Heart left ventricle (tissue), 16 donors: ENCODE measurements at regions of chr6 and their contacts with region 1.

Region 1: DNA sequence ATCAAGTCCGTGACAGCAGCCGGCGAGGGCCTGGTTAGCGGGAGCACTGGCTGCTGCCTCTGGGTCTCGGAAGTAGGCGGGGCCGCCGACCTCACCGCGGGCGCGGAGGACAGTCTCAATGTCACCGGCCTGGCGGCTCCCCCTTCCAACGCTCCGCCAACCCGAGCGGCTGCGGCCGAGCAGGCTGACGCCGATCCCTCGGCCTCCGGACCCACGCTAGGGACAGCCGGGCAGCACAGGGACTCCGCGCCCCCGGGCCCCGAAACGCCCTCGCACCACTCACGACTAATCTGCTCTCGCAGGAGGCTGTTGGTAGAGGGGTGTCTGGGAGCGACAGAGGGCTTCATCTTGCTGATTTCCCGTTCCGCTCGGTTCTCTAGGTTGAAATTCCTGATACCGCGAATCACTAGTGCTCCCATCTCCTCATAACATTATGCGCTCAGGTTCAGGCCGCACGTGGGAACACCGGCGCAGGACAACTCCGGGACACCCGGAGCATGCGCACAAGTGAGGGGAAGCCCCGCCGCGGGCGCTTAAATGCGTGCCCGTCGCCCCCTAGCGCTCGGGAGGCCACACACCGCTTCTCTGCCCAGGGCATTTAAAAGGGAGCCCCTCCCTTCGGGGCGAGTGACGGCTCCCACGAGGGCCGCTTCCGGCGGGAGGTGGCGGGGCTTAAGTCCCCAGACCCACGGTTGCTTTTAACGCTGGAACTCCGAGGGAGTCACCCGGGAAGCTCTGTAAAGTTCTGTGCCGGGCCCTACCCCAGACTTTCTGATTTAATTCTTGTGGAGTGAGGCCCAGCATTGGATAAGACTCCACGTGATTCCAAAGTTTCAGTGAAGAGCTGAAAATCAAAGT is at the start of gene NDUFAF4:
- DNase-seq: peak; percentile 96 to 98 (median 97)
- ATAC-seq: peak; percentile 98 to 99 (median 98)
- H3K4me3 ChIP-seq: peak within 1 kb of the TSS; percentile 72 to 97 (median 92)
- H3K27ac ChIP-seq: peak within 1 kb of the TSS; percentile 91 to 99 (median 96)
- H3K4me1 ChIP-seq: peaks cover 3 to 50% (median 32%) of the 10 kb centered on the region in 12 donors
- H3K27me3 ChIP-seq: no peaks in the 10 kb centered on the region
- CTCF ChIP-seq: peak; percentile 89 to 99 (median 94)
- POLR2A ChIP-seq: peak in 1 of 2 donors; percentile 52
- total RNA-seq, gene NDUFAF4: 59.6 to 107 (median 89.7) TPM

Region 2: GRCh38 chr6:96521644-96522464 is 375.8 kb before region 1 on chr6 and contains the start of gene UFL1:
- intact Hi-C with region 1: loop called in 2 of 10 experiments (anchors 10 kb)
- DNase-seq: peak; percentile 95 to 97 (median 96)
- ATAC-seq: peak; percentile 100
- H3K4me3 ChIP-seq: peak within 1 kb of the TSS; percentile 70 to 93 (median 84)
- H3K27ac ChIP-seq: peak within 1 kb of the TSS; percentile 83 to 98 (median 96)
- H3K4me1 ChIP-seq: peaks cover 0 to 31% (median 24%) of the 10 kb centered on the region in 12 donors
- H3K27me3 ChIP-seq: no peaks in the 10 kb centered on the region
- CTCF ChIP-seq: peak in 1 of 12 donors; percentile 40
- POLR2A ChIP-seq: peak; percentile 32 to 81
- total RNA-seq, gene UFL1: 19.0 to 30.3 (median 24.8) TPM

Region 3: GRCh38 chr6:96542702-96543101 is 354.9 kb before region 1 on chr6:
- intact Hi-C with region 1: loop called in 2 of 10 experiments (anchors 5 to 10 kb)
- DNase-seq: no peak
- ATAC-seq: no peak
- H3K4me3 ChIP-seq: no peak overlapping the region
- H3K27ac ChIP-seq: no peak overlapping the region
- H3K4me1 ChIP-seq: no peaks in the 10 kb centered on the region
- H3K27me3 ChIP-seq: no peaks in the 10 kb centered on the region
- CTCF ChIP-seq: peak in 9 of 12 donors; percentile 9 to 56 (median 39)
- POLR2A ChIP-seq: no peak

Region 4: GRCh38 chr6:96837081-96837971 is 60.3 kb before region 1 on chr6 and contains the start of gene GPR63:
- intact Hi-C with region 1: loop called in 1 of 10 experiments (anchors 5 kb)
- DNase-seq: peak; percentile 45 to 82 (median 59)
- ATAC-seq: peak; percentile 60 to 94 (median 89)
- H3K4me3 ChIP-seq: peak within 1 kb of the TSS; percentile 49 to 92 (median 76)
- H3K27ac ChIP-seq: peak within 1 kb of the TSS in 7 of 12 donors; percentile 23 to 55 (median 33)
- H3K4me1 ChIP-seq: peaks cover 0 to 19% (median 4%) of the 10 kb centered on the region in 12 donors
- H3K27me3 ChIP-seq: peaks cover 0 to 11% (median 0%) of the 10 kb centered on the region in 9 donors
- CTCF ChIP-seq: no peak
- POLR2A ChIP-seq: peak in 1 of 2 donors; percentile 24
- total RNA-seq, gene GPR63: 0.31 to 2.7 (median 1.2) TPM

Region 5: DNA sequence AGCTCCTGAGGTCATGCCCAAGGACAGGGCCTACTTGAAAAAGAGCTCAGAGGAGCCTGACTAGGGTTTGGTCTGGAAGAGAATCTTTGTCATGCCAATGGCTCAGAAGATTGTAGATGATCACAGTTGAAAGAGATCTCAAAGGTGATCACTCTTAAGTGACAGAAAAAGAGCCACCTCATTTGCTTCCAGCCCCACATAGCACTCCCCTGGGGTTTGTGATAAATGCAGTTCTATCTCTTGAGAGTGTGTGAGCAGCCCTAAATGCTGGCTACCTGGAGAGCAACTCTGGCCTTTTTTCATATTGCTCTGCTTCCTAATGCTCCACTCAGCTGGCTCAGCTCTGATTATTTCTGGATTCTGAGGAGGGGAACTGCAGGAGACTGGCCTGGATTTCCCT is 66.2 kb after region 1 on chr6:
- intact Hi-C with region 1: no loop called
- DNase-seq: no peak
- ATAC-seq: no peak
- H3K4me3 ChIP-seq: no peak overlapping the region
- H3K27ac ChIP-seq: no peak overlapping the region
- H3K4me1 ChIP-seq: peaks cover 0 to 3% (median 0%) of the 10 kb centered on the region in 12 donors
- H3K27me3 ChIP-seq: no peaks in the 10 kb centered on the region
- CTCF ChIP-seq: no peak
- POLR2A ChIP-seq: no peak

Region 6: DNA sequence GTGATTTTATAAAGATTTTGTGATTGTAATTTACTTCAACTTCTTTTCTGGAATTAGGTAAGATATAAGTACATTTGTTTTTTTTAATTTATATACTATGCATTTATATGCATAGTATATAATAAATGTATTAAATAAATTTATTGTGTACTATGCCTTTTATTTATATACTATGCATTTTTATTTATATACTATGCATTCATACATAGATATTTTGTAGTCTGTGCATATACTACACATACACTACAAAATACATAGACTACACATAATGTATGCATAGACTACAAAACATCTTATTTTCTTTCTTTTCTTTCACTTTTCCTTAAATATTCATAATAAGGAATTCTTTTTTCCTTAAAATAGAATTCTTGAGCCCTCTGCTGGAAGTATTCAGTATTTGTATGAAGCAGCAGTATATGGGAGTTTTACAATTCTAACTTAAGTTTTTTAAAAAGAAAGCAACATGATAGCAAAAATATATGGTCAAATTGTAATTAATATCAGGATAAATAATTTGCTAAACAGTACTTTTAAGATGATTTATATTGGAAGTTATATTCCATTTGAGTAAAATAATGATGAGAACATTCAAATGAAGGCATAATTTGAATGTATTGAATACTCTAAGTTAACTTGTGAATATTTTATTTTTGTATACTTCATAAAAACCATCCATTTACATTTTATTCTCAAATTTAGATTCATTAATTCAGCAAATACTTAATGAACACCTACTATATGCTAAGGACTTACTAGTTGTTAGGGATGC is 156.2 kb after region 1 on chr6:
- intact Hi-C with region 1: loop called (anchors 1 to 5 kb)
- DNase-seq: no peak
- ATAC-seq: no peak
- H3K4me3 ChIP-seq: no peak overlapping the region
- H3K27ac ChIP-seq: no peak overlapping the region
- H3K4me1 ChIP-seq: peaks cover 0 to 4% (median 0%) of the 10 kb centered on the region in 12 donors
- H3K27me3 ChIP-seq: no peaks in the 10 kb centered on the region
- CTCF ChIP-seq: peak; percentile 33 to 67 (median 54)
- POLR2A ChIP-seq: no peak

Region 7: DNA sequence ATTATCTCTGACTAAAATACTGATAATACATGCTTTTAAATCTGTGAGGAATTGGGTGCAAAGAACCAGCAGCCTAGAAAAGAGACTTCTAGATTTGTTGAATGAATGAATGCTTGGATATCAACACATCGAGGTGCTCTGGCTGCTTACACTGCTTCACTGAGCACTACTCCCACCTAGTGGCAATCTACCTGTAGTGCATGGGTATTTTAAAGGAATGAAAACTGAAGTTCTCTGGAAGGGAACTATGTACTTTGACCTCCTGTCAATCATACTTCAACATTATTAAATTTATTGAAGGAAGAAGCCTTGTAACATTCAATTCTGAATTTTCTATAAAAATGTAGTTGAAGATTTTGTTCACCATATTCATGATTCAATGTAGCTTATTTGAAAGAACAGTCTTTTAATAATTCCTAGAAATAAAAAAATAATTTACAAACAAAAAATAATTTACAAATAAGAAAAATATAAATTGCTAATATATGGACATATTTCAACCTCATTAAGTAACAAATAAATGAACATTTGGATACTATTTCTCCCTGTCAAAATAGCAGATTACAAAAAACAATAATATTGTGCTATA is 496.6 kb after region 1 on chr6:
- intact Hi-C with region 1: loop called in 1 of 10 experiments (anchors 10 kb)
- DNase-seq: peak in 2 of 5 donors; percentile 11 to 28
- ATAC-seq: peak in 2 of 4 donors; percentile 67 to 69
- H3K4me3 ChIP-seq: no peak overlapping the region
- H3K27ac ChIP-seq: no peak overlapping the region
- H3K4me1 ChIP-seq: no peaks in the 10 kb centered on the region
- H3K27me3 ChIP-seq: no peaks in the 10 kb centered on the region
- CTCF ChIP-seq: peak; percentile 80 to 98 (median 89)
- POLR2A ChIP-seq: no peak